ENCODE measurements at regions of chr12 and their contacts with region 1.

Region 1: GRCh38 chr12:46915082-46915481 is 89.3 kb upstream of the SLC38A4 start:
- DNase-seq: no peak

Region 2: GRCh38 chr12:46895726-46896125 is 19.4 kb before region 1 on chr12:
- intact Hi-C with region 1: loop called (anchors 1 kb)
- DNase-seq: no peak

Region 3: DNA sequence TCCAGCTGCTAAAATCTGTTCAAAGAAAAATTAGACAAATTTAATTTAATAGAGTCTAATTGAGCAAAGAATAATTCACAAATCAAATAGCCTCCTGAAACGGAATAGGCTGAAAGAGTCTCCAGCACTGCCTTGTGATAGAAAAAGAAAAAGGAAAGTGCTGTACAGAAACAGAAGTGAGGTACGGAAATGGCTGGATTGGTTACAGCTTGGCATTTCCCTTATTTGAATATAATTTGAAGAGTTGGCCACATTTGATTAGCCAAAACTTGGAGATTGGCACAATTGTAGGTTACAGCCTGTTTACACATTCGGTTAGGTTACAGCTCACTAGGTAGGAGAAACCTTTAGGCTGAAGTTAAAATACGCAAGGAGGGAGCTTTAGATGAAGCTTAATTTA is 139.6 kb after region 1 on chr12:
- intact Hi-C with region 1: no loop called
- DNase-seq: no peak

Measured in posterior cingulate gyrus (tissue), 11 donors.